ENCODE measurements at regions of chr18 and their contacts with region 1.

Region 1: GRCh38 chr18:21704603-21705364 is at the start of gene ABHD3:
- DNase-seq: peak; percentile 94 to 96
- H3K4me3 ChIP-seq: peak within 1 kb of the TSS; percentile 84
- H3K4me3 Mint-ChIP-seq: peak within 1 kb of the TSS; percentile 86
- H3K27ac Mint-ChIP-seq: peak within 1 kb of the TSS; percentile 64
- H3K4me1 ChIP-seq: peaks cover 6% of the 10 kb centered on the region
- H3K4me1 Mint-ChIP-seq: peaks cover 6% of the 10 kb centered on the region
- H3K27me3 ChIP-seq: no peaks in the 10 kb centered on the region
- H3K27me3 Mint-ChIP-seq: no peaks in the 10 kb centered on the region
- CTCF ChIP-seq: peak; percentile 25 to 39
- total RNA-seq, gene ABHD3: 29.3 and 31.8 TPM in 2 replicates

Region 2: DNA sequence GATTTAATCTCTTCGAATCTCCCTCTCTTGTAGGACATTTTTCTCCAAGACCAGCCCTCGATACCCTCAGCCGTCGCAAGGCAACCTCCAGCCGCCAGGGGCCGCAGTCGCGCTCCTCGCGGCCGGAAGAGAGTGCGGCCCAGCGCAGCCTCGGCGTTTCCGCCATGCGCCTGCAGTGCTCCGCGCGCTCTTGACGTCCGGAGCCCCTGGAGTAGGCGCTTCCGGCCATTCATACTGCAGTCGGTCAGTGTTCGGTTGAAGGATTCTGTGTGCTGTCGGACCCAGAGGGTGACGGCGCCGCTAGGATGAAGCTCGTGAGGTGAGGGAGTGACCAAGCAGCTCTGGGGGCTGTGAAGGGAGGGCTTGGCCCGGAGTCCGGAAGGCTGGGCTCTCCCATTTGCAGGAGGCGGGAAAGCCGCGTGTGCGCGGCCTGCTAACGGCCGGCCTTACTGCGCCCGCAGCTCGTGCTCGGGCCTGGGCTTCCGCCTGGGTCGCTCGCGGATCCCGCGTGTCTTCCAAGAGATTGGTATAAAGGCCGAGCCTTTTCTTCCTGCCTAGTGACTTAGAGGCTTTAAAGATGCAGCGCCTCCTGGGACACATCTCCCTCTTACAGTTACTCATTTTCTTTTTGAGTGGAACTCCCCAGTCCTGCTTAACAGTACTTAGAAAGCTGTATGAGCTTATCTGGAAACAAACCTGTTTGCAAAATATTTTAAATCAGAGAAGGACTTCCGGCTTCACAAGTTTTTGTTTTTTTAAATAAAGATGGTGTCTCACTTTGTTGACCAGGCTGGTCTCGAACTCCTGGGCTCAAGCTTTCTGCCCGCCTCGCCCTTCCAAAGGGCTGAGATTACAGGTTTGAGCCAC is 92.4 kb before region 1 on chr18 and contains the start of gene SNRPD1:
- CTCF ChIA-PET with region 1: interaction called, 4 read pairs
- POLR2A ChIA-PET with region 1: no interaction called
- intact Hi-C with region 1: loop called (anchors 2 kb)
- DNase-seq: peak; percentile 89 to 94
- H3K4me3 ChIP-seq: peak within 1 kb of the TSS; percentile 77
- H3K4me3 Mint-ChIP-seq: peak within 1 kb of the TSS; percentile 90
- H3K27ac Mint-ChIP-seq: peak within 1 kb of the TSS; percentile 96
- H3K4me1 ChIP-seq: 0 out of 2 replicates have a peak, but pooled peaks cover 4% of the 10 kb centered on the region
- H3K4me1 Mint-ChIP-seq: peaks cover 7% of the 10 kb centered on the region
- H3K27me3 ChIP-seq: no peaks in the 10 kb centered on the region
- H3K27me3 Mint-ChIP-seq: no peaks in the 10 kb centered on the region
- CTCF ChIP-seq: peak; percentile 80 to 92
- total RNA-seq, gene SNRPD1: 129 and 134 TPM in 2 replicates

Region 3: GRCh38 chr18:21682371-21683051 is 22.3 kb before region 1 on chr18:
- CTCF ChIA-PET with region 1: no interaction called
- POLR2A ChIA-PET with region 1: interaction called, 19 read pairs
- intact Hi-C with region 1: no loop called
- DNase-seq: no peak
- H3K4me3 ChIP-seq: no peak overlapping the region
- H3K4me3 Mint-ChIP-seq: no peak overlapping the region
- H3K27ac Mint-ChIP-seq: no peak overlapping the region
- H3K4me1 ChIP-seq: peaks cover 28% of the 10 kb centered on the region
- H3K4me1 Mint-ChIP-seq: peaks cover 12% of the 10 kb centered on the region
- H3K27me3 ChIP-seq: no peaks in the 10 kb centered on the region
- H3K27me3 Mint-ChIP-seq: no peaks in the 10 kb centered on the region
- CTCF ChIP-seq: no peak

Measured in Caco-2 (cell line).